Heart right ventricle (tissue), 16 donors: ENCODE measurements at regions of chr7 and their contacts with region 1.

Region 1: DNA sequence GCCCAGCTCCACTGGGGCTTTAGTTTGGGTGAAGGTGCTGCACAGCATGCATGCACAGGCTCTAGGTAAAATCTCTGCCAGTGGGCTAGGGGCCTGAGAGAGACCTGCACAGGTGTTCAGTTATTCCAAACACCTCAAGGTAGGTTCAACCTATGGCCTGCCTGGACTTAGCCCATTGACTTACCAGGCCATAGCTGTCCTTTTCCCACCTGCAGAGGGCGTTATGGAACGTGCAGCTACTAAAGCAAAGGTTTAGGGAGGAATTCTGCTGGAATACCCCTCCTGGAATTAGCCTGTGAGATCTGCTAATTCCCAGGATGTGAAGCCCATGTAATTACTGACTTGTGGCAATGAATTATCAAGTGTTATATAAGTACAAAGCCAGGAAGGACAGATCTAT is 3.6 kb downstream of the VWC2 start:
- DNase-seq: peak in 1 of 2 donors; percentile 27
- ATAC-seq: peak in 3 of 8 donors; percentile 23 to 34 (median 31)
- H3K4me3 ChIP-seq: peak overlapping the region in 3 of 10 donors; percentile 6 to 72 (median 67)
- H3K27ac ChIP-seq: peak overlapping the region in 8 of 10 donors; percentile 22 to 96 (median 62)
- H3K4me1 ChIP-seq: peaks cover 4 to 72% (median 21%) of the 10 kb centered on the region in 9 donors
- H3K27me3 ChIP-seq: peaks cover 0 to 65% (median 35%) of the 10 kb centered on the region in 7 donors
- CTCF ChIP-seq: peak in 7 of 9 donors; percentile 32 to 58 (median 46)

Region 2: DNA sequence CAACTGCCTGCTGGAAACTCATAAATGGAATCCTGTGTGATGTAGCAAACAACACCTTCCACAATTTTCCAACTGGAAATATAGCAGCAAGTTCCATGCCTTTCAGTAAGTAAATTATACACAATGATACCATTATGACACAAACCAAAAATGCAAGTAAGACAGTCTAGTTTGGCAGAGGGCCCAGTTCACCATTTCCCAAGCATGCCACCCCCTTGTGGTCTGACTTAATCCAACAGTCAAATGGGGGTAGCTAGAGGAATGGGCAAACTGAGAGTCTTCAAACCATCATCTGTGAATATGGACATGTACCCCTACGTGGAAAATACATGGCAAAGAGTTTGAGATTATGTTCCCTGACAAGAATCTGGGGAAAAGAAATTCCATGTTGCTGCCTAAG is 141.2 kb before region 1 on chr7:
- intact Hi-C with region 1: loop called in 6 of 10 experiments (anchors 2 to 10 kb)
- DNase-seq: no peak
- ATAC-seq: no peak
- H3K4me3 ChIP-seq: no peak overlapping the region
- H3K27ac ChIP-seq: no peak overlapping the region
- H3K4me1 ChIP-seq: peaks cover 0 to 20% (median 9%) of the 10 kb centered on the region in 9 donors
- H3K27me3 ChIP-seq: no peaks in the 10 kb centered on the region
- CTCF ChIP-seq: peak in 8 of 9 donors; percentile 8 to 37 (median 19)

Region 3: GRCh38 chr7:49707891-49708290 is 69.1 kb before region 1 on chr7:
- intact Hi-C with region 1: loop called in 1 of 10 experiments (anchors 5 kb)
- DNase-seq: no peak
- ATAC-seq: no peak
- H3K4me3 ChIP-seq: no peak overlapping the region
- H3K27ac ChIP-seq: peak overlapping the region in 1 of 10 donors; percentile 44
- H3K4me1 ChIP-seq: peaks cover 0 to 15% (median 0%) of the 10 kb centered on the region in 9 donors
- H3K27me3 ChIP-seq: no peaks in the 10 kb centered on the region
- CTCF ChIP-seq: no peak

Region 4: GRCh38 chr7:49717547-49717946 is 59.4 kb before region 1 on chr7:
- intact Hi-C with region 1: loop called in 1 of 10 experiments (anchors 2 kb)
- DNase-seq: no peak
- ATAC-seq: no peak
- H3K4me3 ChIP-seq: no peak overlapping the region
- H3K27ac ChIP-seq: no peak overlapping the region
- H3K4me1 ChIP-seq: peaks cover 0 to 10% (median 0%) of the 10 kb centered on the region in 9 donors
- H3K27me3 ChIP-seq: no peaks in the 10 kb centered on the region
- CTCF ChIP-seq: no peak